GM12878 (cell line): ENCODE measurements at regions of chr7 and their contacts with region 1.

Region 1: DNA sequence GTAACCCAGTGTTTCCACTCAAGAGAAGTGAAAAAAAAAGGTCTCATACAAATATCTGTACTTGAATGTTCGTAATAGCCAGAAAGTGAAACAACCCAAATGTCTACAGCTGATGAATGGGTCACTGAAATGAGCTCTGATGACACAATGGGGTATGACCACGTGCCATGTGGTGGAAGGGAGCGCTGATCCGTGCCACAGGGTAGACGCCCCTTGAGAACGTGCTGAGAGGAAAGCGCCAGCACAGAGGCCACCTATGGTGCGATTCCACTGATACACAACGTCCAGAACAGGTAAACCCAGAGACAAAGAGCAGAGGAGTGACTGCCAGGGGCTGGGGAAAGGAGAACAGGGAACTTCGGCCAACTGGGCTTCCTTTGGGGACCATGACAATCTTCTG is 50.3 kb downstream of the MAD1L1 start:
- DNase-seq: peak; percentile 74
- ATAC-seq: peak; percentile 96
- H3K4me3 ChIP-seq: no peak overlapping the region
- H3K27ac ChIP-seq: peak overlapping the region; percentile 68
- H3K4me1 ChIP-seq: peaks cover 8% of the 10 kb centered on the region
- H3K27me3 ChIP-seq: no peaks in the 10 kb centered on the region
- CTCF ChIP-seq: no peak
- EP300 ChIP-seq: peak in 1 of 2 experiments; percentile 41; a peak in 1 of 4 replicates
- POLR2A ChIP-seq: no peak
- RAD21 ChIP-seq: no peak

Region 2: DNA sequence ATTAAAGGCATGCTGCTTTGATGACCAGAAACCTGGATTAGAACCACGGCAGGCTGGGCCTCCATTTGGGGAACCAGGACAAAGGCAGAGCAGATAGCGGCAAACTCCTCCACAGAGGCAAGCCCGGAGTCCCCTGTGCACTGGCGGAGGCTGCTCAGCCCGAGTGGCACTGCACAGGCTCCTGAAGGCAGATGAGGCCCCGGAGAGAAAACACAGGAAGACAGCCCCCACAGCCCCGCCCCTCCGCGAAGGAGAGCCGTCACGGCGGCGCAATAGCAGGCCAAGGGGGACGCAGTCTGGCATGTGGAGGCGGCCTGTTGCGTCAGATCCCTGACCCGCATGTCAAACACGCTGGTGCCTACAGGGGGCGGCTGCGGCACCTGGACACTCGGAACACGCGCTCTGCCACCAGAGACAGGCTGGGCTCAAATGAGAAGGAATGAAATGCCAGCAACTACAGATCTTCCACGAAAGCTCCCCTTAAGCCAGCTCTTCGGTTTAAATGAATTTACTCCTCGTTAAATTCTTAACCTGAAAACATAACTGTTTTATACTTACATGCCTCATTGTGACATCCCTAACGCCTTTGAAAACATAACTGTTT is 78.3 kb before region 1 on chr7:
- CTCF ChIA-PET with region 1: interaction called, 14 read pairs
- POLR2A ChIA-PET with region 1: interaction called, 3 read pairs
- RAD21 ChIA-PET with region 1: interaction called, 16 read pairs
- SMC1A ChIA-PET with region 1: interaction called, 13 read pairs
- in situ Hi-C with region 1: no loop called
- intact Hi-C with region 1: no loop called
- DNase-seq: no peak
- ATAC-seq: peak; percentile 48
- H3K4me3 ChIP-seq: no peak overlapping the region
- H3K27ac ChIP-seq: no peak overlapping the region
- H3K4me1 ChIP-seq: peaks cover 15% of the 10 kb centered on the region
- H3K27me3 ChIP-seq: no peaks in the 10 kb centered on the region
- CTCF ChIP-seq: peak; percentile 15 to 47 (median 37); a peak in 4 of 6 replicates
- EP300 ChIP-seq: no peak
- POLR2A ChIP-seq: no peak
- RAD21 ChIP-seq: no peak

Region 3: DNA sequence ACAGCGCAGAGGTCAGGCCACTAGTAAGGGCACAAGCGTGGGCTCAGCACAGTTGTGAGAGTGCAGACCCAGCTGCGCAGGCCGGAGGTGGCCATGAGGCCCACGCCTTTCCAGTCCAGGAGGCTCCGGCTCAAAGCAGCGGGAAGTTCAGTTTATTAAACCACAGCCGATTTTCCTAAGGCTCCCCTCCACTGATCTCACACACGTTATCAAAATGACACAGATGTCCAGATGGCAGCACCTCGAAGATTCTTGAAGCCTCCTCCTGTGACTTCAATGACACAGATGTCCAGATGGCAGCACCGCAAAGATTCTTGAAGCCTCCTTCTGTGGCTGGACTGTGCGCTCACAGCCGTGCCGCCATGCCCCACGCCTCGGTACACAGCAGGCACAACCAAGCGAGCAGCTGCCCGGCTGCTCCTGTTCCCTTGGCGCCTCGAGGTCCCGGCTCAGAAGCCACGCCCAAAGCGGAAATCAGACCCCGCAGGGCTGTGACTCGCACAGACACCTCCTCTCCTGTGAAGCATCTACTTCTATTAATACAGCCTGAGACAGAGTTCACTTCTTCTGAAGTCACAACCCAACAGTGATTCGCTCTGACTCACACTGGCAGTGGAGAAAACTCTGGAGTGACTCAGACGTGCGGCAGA is 72.4 kb before region 1 on chr7:
- CTCF ChIA-PET with region 1: no interaction called
- POLR2A ChIA-PET with region 1: no interaction called
- RAD21 ChIA-PET with region 1: interaction called, 3 read pairs
- SMC1A ChIA-PET with region 1: interaction called, 3 read pairs
- in situ Hi-C with region 1: no loop called
- intact Hi-C with region 1: loop called (anchors 5 kb)
- DNase-seq: peak; percentile 36
- ATAC-seq: peak; percentile 89
- H3K4me3 ChIP-seq: no peak overlapping the region
- H3K27ac ChIP-seq: peak overlapping the region; percentile 61
- H3K4me1 ChIP-seq: peaks cover 26% of the 10 kb centered on the region
- H3K27me3 ChIP-seq: no peaks in the 10 kb centered on the region
- CTCF ChIP-seq: no peak
- EP300 ChIP-seq: no peak
- POLR2A ChIP-seq: peak; percentile 65; the same call in 1 of the 2 replicates
- RAD21 ChIP-seq: 0 out of 2 replicates have a peak, but pooled peaks have one; percentile 4

Region 4: GRCh38 chr7:2165610-2166594 is 16.6 kb before region 1 on chr7:
- CTCF ChIA-PET with region 1: interaction called, 12 read pairs
- POLR2A ChIA-PET with region 1: interaction called, 25 read pairs
- RAD21 ChIA-PET with region 1: interaction called, 57 read pairs
- SMC1A ChIA-PET with region 1: interaction called, 56 read pairs
- in situ Hi-C with region 1: no loop called
- intact Hi-C with region 1: loop called (anchors 1 kb)
- DNase-seq: peak; percentile 79
- ATAC-seq: peak; percentile 95
- H3K4me3 ChIP-seq: no peak overlapping the region; the same call in 1 of the 2 replicates
- H3K27ac ChIP-seq: peak overlapping the region; percentile 74
- H3K4me1 ChIP-seq: peaks cover 22% of the 10 kb centered on the region
- H3K27me3 ChIP-seq: no peaks in the 10 kb centered on the region
- CTCF ChIP-seq: no peak
- EP300 ChIP-seq: peak; percentile 93 to 97
- POLR2A ChIP-seq: no peak
- RAD21 ChIP-seq: no peak

Region 5: DNA sequence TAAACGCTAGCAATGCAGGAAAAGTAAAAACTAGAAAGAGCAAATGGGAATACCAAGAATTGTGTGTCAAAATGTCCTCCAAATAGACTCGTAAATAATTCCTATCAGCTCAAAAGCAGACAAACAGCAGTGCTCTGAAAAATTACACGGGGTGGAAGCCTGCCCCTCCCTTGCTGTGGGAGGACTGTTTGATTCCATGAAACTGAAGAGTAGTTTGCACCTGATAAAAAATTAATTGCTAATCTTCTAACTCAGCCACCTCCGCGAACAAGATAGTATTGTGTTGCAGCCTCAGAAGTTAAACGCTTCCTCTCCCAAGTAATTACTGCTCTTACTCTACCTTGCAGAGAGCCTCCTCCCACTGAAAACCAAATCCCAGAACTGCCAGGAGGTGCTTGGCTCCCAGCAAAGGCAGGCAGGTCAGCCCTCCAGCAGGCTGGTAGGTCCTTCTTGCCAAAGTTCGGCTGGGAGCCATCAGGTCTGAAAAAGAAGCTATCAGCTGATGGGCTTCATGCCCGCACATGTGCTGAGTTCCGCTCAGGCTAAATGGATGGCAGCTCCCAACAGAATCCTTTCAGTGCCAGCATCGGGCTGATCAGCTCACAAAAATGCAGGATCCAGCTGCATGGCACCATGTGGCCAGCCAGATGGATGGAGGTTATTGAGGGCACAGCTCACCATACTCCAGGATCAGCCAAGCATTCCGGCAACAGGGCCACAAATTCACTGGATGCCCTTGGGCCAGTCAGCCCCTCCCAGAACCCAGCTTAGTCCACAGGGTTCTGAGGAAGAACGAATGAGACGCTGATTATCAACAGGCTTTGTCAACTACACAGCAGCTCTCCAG is 13.2 kb after region 1 on chr7:
- CTCF ChIA-PET with region 1: interaction called, 16 read pairs
- POLR2A ChIA-PET with region 1: interaction called, 4 read pairs
- RAD21 ChIA-PET with region 1: interaction called, 4 read pairs
- SMC1A ChIA-PET with region 1: interaction called, 5 read pairs
- in situ Hi-C with region 1: no loop called
- intact Hi-C with region 1: no loop called
- DNase-seq: no peak
- ATAC-seq: no peak
- H3K4me3 ChIP-seq: no peak overlapping the region
- H3K27ac ChIP-seq: no peak overlapping the region
- H3K4me1 ChIP-seq: no peaks in the 10 kb centered on the region
- H3K27me3 ChIP-seq: no peaks in the 10 kb centered on the region
- CTCF ChIP-seq: no peak
- EP300 ChIP-seq: no peak
- POLR2A ChIP-seq: no peak
- RAD21 ChIP-seq: no peak

Region 6: DNA sequence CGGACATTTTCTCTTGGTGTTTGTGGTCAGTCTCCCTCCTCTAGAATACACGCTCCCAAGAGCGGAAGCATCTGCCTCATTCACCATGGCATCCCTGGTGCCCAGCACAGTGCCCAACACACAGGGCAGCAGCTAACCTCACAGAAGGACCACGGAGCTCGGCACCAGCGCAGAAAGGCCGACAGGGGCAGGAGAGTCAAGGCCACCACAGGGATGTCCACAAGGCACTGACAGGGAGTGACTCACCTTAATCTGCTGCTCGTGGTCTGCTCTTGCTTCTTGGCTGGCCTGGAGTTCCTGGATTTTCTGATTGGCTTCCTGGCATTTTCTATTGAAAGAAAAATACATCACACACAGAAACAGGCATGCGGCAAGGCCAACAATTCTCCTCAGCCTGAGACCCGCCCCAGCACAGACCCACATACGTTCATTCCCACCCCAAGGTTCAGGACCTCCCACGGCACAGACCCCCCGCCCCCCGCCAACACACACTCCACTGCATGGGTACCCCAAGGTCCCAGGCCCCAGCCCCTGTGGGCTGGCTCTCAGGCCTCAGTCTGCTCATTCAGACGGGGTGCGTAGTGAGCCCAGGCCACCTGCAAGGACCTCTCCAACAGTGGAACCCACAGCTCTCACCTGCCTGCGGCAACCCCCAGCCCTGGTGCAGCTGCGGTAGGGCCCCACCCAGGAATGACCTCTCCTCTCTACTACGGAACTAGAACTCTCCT is 35.4 kb after region 1 on chr7:
- CTCF ChIA-PET with region 1: no interaction called
- POLR2A ChIA-PET with region 1: no interaction called
- RAD21 ChIA-PET with region 1: no interaction called
- SMC1A ChIA-PET with region 1: no interaction called
- in situ Hi-C with region 1: no loop called
- intact Hi-C with region 1: no loop called
- DNase-seq: no peak
- ATAC-seq: no peak
- H3K4me3 ChIP-seq: no peak overlapping the region
- H3K27ac ChIP-seq: no peak overlapping the region
- H3K4me1 ChIP-seq: no peaks in the 10 kb centered on the region
- H3K27me3 ChIP-seq: no peaks in the 10 kb centered on the region
- CTCF ChIP-seq: no peak
- EP300 ChIP-seq: no peak
- POLR2A ChIP-seq: no peak
- RAD21 ChIP-seq: no peak